ENCODE measurements at regions of chr16 and their contacts with region 1.

Region 1: DNA sequence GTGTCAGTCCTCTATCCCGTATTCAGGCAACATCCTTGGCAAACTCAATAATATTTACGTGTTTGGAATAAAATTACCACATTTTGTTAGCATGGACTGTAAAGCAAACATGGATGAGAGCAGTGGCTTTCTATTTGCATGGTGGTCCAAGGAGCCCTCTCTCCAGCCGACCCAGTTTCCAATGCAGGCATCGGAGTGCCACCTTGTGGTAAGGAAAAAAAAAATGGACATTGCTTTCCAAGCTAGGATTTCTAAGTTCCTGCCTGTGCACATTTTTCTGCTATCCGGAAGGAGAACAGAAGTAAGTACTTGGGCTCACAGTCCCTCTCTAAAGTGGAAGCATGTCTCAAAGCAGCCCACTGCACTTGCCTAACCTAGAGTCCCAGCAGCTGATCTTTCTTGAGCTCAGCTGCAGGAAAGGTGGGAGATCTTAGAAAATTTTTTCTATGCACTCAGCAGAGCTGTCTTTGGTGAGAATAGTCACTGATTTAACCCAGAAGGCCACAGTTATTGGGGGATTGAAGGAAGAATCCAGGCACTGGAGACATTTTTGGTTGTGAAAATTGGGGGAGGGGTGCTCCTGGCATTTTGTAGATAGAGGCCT is 46.0 kb upstream of the ERCC4 start:
- DNase-seq: no peak
- ATAC-seq: no peak
- H3K4me3 ChIP-seq: no peak overlapping the region
- H3K27ac ChIP-seq: no peak overlapping the region
- H3K4me1 ChIP-seq: peaks cover 0 to 4% (median 0%) of the 10 kb centered on the region in 9 donors
- H3K27me3 ChIP-seq: peaks cover 0 to 3% (median 0%) of the 10 kb centered on the region in 7 donors
- CTCF ChIP-seq: peak in 8 of 9 donors; percentile 28 to 60 (median 50)

Region 2: GRCh38 chr16:13733546-13733945 is 140.4 kb before region 1 on chr16:
- intact Hi-C with region 1: loop called in 1 of 10 experiments (anchors 5 kb)
- DNase-seq: no peak
- ATAC-seq: no peak
- H3K4me3 ChIP-seq: no peak overlapping the region
- H3K27ac ChIP-seq: no peak overlapping the region
- H3K4me1 ChIP-seq: no peaks in the 10 kb centered on the region
- H3K27me3 ChIP-seq: peaks cover 0 to 7% (median 0%) of the 10 kb centered on the region in 7 donors
- CTCF ChIP-seq: no peak

Region 3: DNA sequence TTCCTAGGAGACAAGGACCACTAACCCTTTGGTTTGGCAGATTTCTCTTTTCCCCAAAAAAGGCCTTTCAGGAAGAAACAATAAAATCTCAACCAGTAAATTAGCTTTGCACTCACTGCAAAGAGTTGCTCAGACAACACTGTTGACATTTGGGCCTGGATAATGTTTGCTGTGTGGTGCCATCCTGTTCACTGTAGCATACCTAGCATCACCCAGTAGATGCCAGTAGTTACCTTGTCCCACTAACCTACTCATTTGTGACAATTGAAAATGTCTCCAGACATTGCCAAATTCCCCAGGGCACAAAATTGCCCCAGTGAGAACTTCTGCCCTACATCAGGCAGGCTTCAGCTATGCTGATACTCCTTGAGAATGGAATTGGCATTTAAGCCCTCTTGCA is 131.0 kb before region 1 on chr16:
- intact Hi-C with region 1: loop called in 2 of 10 experiments (anchors 5 kb)
- DNase-seq: no peak
- ATAC-seq: no peak
- H3K4me3 ChIP-seq: no peak overlapping the region
- H3K27ac ChIP-seq: no peak overlapping the region
- H3K4me1 ChIP-seq: no peaks in the 10 kb centered on the region
- H3K27me3 ChIP-seq: no peaks in the 10 kb centered on the region
- CTCF ChIP-seq: no peak

Region 4: GRCh38 chr16:13956635-13957196 is 82.8 kb after region 1 on chr16:
- intact Hi-C with region 1: no loop called
- DNase-seq: no peak
- ATAC-seq: peak in 1 of 8 donors; percentile 4
- H3K4me3 ChIP-seq: peak overlapping the region in 6 of 10 donors; percentile 24 to 37 (median 32)
- H3K27ac ChIP-seq: peak overlapping the region in 8 of 10 donors; percentile 27 to 89 (median 70)
- H3K4me1 ChIP-seq: peaks cover 0 to 43% (median 15%) of the 10 kb centered on the region in 9 donors
- H3K27me3 ChIP-seq: no peaks in the 10 kb centered on the region
- CTCF ChIP-seq: no peak

Region 5: GRCh38 chr16:14003074-14003570 is 129.2 kb after region 1 on chr16:
- intact Hi-C with region 1: no loop called
- DNase-seq: peak; percentile 55 to 80
- ATAC-seq: peak; percentile 57 to 86 (median 72)
- H3K4me3 ChIP-seq: peak overlapping the region in 8 of 10 donors; percentile 17 to 48 (median 42)
- H3K27ac ChIP-seq: peak overlapping the region in 9 of 10 donors; percentile 62 to 84 (median 75)
- H3K4me1 ChIP-seq: peaks cover 8 to 73% (median 61%) of the 10 kb centered on the region in 9 donors
- H3K27me3 ChIP-seq: no peaks in the 10 kb centered on the region
- CTCF ChIP-seq: peak in 4 of 9 donors; percentile 21 to 39 (median 31)

Region 6: DNA sequence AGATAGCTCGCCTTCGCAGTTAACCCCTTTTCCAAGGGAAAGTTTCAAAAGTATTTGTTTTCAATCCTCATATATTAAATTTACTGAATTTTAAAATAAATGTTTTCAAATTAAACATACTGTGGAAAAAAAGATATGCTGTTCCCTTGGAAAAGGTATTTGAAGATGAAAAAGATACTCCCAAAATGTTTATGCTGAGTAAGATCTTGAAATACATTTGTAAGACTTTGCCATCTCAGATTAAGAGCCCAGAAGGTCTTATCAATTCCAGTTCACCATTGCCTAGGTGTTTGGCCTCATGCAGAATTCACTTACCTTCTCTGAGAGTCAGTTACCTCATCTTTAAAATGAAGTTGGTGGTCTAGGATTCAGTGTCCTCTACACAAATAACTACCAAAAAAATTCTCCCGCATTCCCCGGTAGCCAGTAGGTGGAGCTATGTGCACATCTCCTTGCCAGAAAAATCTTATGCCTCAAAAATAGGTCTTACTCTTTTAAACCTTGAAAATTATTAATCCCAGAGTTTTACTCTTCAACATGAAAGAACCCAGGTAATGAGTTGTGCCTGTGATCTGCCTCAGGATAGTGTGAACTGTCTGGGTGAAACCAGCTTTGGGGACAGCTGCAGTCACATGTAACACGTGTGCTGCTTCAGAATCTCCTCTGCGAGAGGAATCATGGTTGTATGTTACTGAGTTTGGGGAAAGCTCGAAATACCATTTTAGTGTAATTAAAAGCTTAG is 375.5 kb after region 1 on chr16:
- intact Hi-C with region 1: no loop called
- DNase-seq: peak in 1 of 2 donors; percentile 43
- ATAC-seq: peak in 1 of 8 donors; percentile 14
- H3K4me3 ChIP-seq: no peak overlapping the region
- H3K27ac ChIP-seq: no peak overlapping the region
- H3K4me1 ChIP-seq: no peaks in the 10 kb centered on the region
- H3K27me3 ChIP-seq: no peaks in the 10 kb centered on the region
- CTCF ChIP-seq: peak; percentile 62 to 89 (median 79)

Measured in heart right ventricle (tissue), 16 donors.